Activated T-helper 1 cell treated with anti-CD3 and anti-CD28 coated beads, Interleukin-12 subunit alpha, Interleukin-12 subunit beta, Interleukin-2, Interleukin-4 antibody, amounts not matched to agents 30 ng/mL and 10 ng/mL and 1 ng/mL, durations not matched to agents 14 hours and 24 hours and 36 hours (primary cell): ENCODE measurements at regions of chr1 and their contacts with region 1.

Region 1: DNA sequence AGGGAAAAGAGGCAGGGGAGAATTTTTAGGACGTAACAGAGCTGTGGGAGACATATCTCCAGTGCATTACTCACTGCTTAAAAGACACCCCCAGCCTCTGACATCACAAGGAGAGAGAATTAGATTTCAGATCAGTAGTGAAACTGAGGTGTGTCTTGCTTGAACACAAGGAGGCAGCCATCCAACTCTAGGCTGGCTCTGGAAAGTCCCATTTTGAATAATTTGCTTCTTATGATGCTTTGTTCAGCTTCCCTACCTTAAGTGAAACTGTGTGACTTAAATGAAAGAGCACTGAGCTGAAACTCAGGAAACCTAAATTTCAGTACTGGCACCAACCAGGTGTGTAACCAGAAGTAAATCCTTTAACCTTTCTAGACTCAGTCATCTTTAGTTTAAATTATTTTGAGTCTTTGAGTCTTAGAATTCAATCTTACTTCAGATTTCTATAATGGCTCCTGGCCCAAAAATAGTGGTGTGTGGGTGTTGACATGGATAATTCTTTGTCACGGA is 251.6 kb upstream of the SGIP1 start:
- DNase-seq: peak; percentile 73
- H3K4me3 Mint-ChIP-seq: peak overlapping the region; percentile 62
- H3K27ac Mint-ChIP-seq: peak overlapping the region; percentile 88
- H3K4me1 Mint-ChIP-seq: peaks cover 90% of the 10 kb centered on the region
- H3K27me3 Mint-ChIP-seq: no peaks in the 10 kb centered on the region

Region 2: GRCh38 chr1:65230731-65231481 is 1051.5 kb before region 1 on chr1:
- intact Hi-C with region 1: loop called (anchors 5 kb)
- DNase-seq: no peak
- H3K4me3 Mint-ChIP-seq: no peak overlapping the region
- H3K27ac Mint-ChIP-seq: peak overlapping the region; percentile 81
- H3K4me1 Mint-ChIP-seq: peaks cover 32% of the 10 kb centered on the region
- H3K27me3 Mint-ChIP-seq: no peaks in the 10 kb centered on the region

Region 3: GRCh38 chr1:66271216-66271903 is 11.0 kb before region 1 on chr1:
- intact Hi-C with region 1: loop called (anchors 1 kb)
- DNase-seq: no peak
- H3K4me3 Mint-ChIP-seq: peak overlapping the region; percentile 38
- H3K27ac Mint-ChIP-seq: peak overlapping the region; percentile 85
- H3K4me1 Mint-ChIP-seq: peaks cover 67% of the 10 kb centered on the region
- H3K27me3 Mint-ChIP-seq: peaks cover 2% of the 10 kb centered on the region

Region 4: DNA sequence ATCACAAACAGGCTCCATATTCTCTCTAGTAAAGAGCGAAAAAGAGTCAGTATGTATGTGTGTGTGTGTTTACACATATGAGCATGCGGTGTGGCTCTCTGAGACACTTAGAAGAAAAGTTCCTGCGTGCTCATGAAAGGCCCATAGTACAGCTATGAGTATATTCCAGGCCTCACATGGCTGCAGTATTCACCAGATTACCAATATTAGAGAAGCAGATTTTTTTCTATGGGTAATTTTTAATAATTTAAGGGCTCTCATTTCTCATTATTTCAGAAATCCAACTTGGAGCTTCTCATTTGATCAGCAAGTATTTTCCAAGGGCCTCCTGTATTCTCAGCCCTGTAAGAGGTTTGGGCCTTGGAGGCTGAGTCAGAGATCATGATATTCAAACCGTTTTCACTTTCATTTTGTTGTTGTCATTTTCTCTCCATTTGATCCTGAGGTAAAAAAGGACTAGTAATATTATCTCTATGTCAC is 18.6 kb after region 1 on chr1:
- intact Hi-C with region 1: loop called (anchors 1 kb)
- DNase-seq: peak; percentile 48
- H3K4me3 Mint-ChIP-seq: peak overlapping the region; percentile 80
- H3K27ac Mint-ChIP-seq: peak overlapping the region; percentile 94
- H3K4me1 Mint-ChIP-seq: peaks cover 47% of the 10 kb centered on the region
- H3K27me3 Mint-ChIP-seq: no peaks in the 10 kb centered on the region

Region 5: GRCh38 chr1:66374561-66375111 is 92.2 kb after region 1 on chr1:
- intact Hi-C with region 1: loop called (anchors 1 kb)
- DNase-seq: peak; percentile 19
- H3K4me3 Mint-ChIP-seq: peak overlapping the region; percentile 77
- H3K27ac Mint-ChIP-seq: peak overlapping the region; percentile 96
- H3K4me1 Mint-ChIP-seq: peaks cover 69% of the 10 kb centered on the region
- H3K27me3 Mint-ChIP-seq: no peaks in the 10 kb centered on the region

Region 6: DNA sequence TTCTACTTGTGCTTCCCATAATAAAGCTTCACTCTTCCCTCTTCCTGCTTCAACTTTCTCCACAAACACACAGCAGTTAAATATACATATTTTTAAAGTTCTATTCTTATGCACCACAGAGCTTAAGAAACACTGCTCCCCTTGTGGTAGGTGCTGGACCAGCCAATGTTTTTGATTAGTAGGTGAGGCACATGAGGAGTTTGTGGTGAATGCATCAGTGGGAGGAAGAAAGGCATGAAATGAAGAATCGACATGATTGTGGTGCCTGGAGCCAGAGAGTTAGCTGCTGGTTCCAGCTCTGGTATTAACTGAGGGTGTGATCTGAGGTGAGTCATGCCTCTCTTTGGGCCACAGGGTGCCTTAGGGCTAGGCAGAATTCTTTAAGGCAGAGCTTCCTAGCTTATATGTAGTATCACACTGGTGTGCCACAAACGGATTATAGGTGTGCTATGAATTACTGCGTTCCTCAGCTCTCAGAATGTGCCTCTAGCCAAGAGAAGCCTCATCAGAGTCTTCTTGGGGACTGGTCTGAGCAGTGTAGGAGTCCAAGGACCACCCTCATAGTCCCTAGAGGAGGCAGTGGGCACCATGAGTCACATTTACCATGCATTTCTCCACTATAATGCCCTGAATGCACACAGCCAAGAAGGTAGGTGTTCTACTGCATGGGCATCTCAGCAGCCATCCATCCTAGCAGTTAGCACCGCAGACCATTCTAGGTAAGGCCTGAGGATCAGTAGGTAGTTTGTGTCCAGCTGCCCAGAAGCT is 154.2 kb after region 1 on chr1:
- intact Hi-C with region 1: loop called (anchors 1 kb)
- DNase-seq: peak; percentile 34
- H3K4me3 Mint-ChIP-seq: no peak overlapping the region
- H3K27ac Mint-ChIP-seq: peak overlapping the region; percentile 2
- H3K4me1 Mint-ChIP-seq: peaks cover 45% of the 10 kb centered on the region
- H3K27me3 Mint-ChIP-seq: no peaks in the 10 kb centered on the region

Region 7: GRCh38 chr1:67174716-67175284 is 892.4 kb after region 1 on chr1:
- intact Hi-C with region 1: loop called (anchors 5 kb)
- DNase-seq: no peak
- H3K4me3 Mint-ChIP-seq: peak overlapping the region; percentile 76
- H3K27ac Mint-ChIP-seq: peak overlapping the region; percentile 98
- H3K4me1 Mint-ChIP-seq: peaks cover 68% of the 10 kb centered on the region
- H3K27me3 Mint-ChIP-seq: no peaks in the 10 kb centered on the region